K562 (cell line): ENCODE measurements at regions of chr22 and their contacts with region 1.

Region 1: GRCh38 chr22:22848364-22848866 is 39.2 kb upstream of the IGLL5 start:
- DNase-seq: peak; percentile 94 to 100 (median 98)
- ATAC-seq: peak; percentile 98
- H3K4me3 ChIP-seq: no peak overlapping the region
- H3K27ac ChIP-seq: no peak overlapping the region
- H3K4me1 ChIP-seq: no peaks in the 10 kb centered on the region
- H3K27me3 ChIP-seq: peaks cover 0 to 8% of the 10 kb centered on the region in 2 experiments; a peak in 1 of 5 replicates
- CTCF ChIP-seq: no peak
- EP300 ChIP-seq: no peak
- POLR2A ChIP-seq: no peak
- RAD21 ChIP-seq: no peak

Region 2: DNA sequence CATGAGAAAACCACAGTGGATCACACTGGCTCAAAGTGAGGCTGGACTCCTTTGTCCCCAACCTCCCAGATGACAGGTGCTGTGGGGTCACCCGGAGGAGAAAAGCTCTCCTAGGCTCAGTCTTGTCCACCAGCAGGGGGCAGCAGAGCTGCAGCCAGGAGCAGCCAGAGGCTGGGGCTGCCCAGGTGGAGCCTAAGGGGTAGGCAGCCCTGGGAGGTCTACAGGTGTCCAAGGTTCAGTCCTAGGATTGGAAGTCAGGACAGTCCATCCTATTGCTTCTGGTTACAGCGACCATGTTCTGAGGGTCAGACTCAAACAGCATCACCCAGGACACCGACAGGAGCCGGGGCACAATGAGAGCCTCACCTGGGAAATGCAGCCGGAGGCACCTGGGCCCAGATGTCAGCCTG is 38.4 kb before region 1 on chr22:
- CTCF ChIA-PET with region 1: interaction called, 13 read pairs
- POLR2A ChIA-PET with region 1: interaction called, 6 read pairs
- in situ Hi-C with region 1: no loop called
- intact Hi-C with region 1: loop called (anchors 2 kb)
- DNase-seq: peak; percentile 97 to 100 (median 98)
- ATAC-seq: peak; percentile 96
- H3K4me3 ChIP-seq: no peak overlapping the region
- H3K27ac ChIP-seq: no peak overlapping the region
- H3K4me1 ChIP-seq: peaks cover 0 to 4% of the 10 kb centered on the region in 2 experiments; a peak in 1 of 5 replicates
- H3K27me3 ChIP-seq: peaks cover 8 to 19% of the 10 kb centered on the region in 2 experiments; a peak in 3 of 5 replicates
- CTCF ChIP-seq: no peak
- EP300 ChIP-seq: no peak
- POLR2A ChIP-seq: no peak
- RAD21 ChIP-seq: no peak

Region 3: DNA sequence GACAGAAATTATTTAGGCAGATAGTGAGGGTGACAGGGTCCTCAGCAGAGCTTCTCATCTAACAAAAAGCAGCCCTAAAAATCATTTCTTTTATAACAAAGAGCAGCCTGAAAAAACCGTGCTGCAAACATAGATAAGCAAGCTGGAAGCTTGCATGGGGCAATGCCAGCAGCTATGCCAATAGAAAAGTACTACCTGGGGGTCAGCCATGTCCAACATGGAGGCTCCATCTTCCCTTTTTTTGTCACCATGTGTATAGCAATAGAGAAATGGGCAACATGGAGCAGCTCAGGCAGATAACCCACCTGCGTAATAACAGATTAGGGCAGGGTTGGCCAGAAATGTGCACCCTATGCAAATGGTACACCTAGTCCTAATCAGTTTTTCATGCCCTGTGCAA is 18.2 kb before region 1 on chr22:
- CTCF ChIA-PET with region 1: interaction called, 5 read pairs
- POLR2A ChIA-PET with region 1: interaction called, 17 read pairs
- in situ Hi-C with region 1: no loop called
- intact Hi-C with region 1: loop called (anchors 2 kb)
- DNase-seq: no peak
- ATAC-seq: no peak
- H3K4me3 ChIP-seq: no peak overlapping the region
- H3K27ac ChIP-seq: no peak overlapping the region
- H3K4me1 ChIP-seq: no peaks in the 10 kb centered on the region
- H3K27me3 ChIP-seq: peaks cover 21 to 36% of the 10 kb centered on the region in 2 experiments
- CTCF ChIP-seq: no peak
- EP300 ChIP-seq: no peak
- POLR2A ChIP-seq: no peak
- RAD21 ChIP-seq: no peak

Region 4: DNA sequence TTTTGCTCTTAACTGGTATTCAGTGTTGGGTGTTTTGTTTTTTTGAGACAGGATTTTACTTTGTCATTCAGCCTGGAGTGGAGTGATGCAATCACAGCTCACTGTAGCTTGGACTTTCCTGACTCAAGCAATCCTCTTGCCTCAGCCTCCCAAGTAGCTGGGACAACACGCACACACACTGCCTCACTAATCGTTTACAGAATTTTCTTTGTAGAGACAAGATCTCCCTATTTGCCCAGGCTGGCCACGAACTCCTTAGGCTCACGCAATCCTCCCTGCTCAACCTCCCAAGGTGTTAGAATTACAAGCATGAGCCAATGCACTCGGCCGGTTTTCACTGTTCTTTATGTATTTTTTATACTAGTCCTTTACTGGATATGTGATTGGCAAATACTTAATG is 11.8 kb before region 1 on chr22:
- CTCF ChIA-PET with region 1: interaction called, 4 read pairs
- POLR2A ChIA-PET with region 1: interaction called, 40 read pairs
- in situ Hi-C with region 1: no loop called
- intact Hi-C with region 1: no loop called
- DNase-seq: peak in 1 of 4 experiments; percentile 53
- ATAC-seq: peak; percentile 71
- H3K4me3 ChIP-seq: no peak overlapping the region
- H3K27ac ChIP-seq: no peak overlapping the region
- H3K4me1 ChIP-seq: peaks cover 0 to 7% of the 10 kb centered on the region in 2 experiments; a peak in 1 of 5 replicates
- H3K27me3 ChIP-seq: peaks cover 25 to 33% of the 10 kb centered on the region in 2 experiments
- CTCF ChIP-seq: no peak
- EP300 ChIP-seq: no peak
- POLR2A ChIP-seq: no peak
- RAD21 ChIP-seq: no peak

Region 5: GRCh38 chr22:22865311-22866072 is 17.1 kb after region 1 on chr22:
- CTCF ChIA-PET with region 1: interaction called, 4 read pairs
- POLR2A ChIA-PET with region 1: interaction called, 12 read pairs
- in situ Hi-C with region 1: no loop called
- intact Hi-C with region 1: no loop called
- DNase-seq: peak in 2 of 4 experiments; percentile 42 to 52
- ATAC-seq: no peak
- H3K4me3 ChIP-seq: no peak overlapping the region
- H3K27ac ChIP-seq: no peak overlapping the region
- H3K4me1 ChIP-seq: no peaks in the 10 kb centered on the region
- H3K27me3 ChIP-seq: peaks cover 0 to 20% of the 10 kb centered on the region in 2 experiments; a peak in 3 of 5 replicates
- CTCF ChIP-seq: no peak
- EP300 ChIP-seq: no peak
- POLR2A ChIP-seq: no peak
- RAD21 ChIP-seq: no peak

Region 6: GRCh38 chr22:22942511-22943329 is 94.3 kb after region 1 on chr22:
- CTCF ChIA-PET with region 1: interaction called, 7 read pairs
- POLR2A ChIA-PET with region 1: interaction called, 5 read pairs
- in situ Hi-C with region 1: no loop called
- intact Hi-C with region 1: loop called (anchors 1 kb)
- DNase-seq: peak; percentile 99 to 100 (median 100)
- ATAC-seq: peak; percentile 94
- H3K4me3 ChIP-seq: no peak overlapping the region
- H3K27ac ChIP-seq: no peak overlapping the region
- H3K4me1 ChIP-seq: peaks cover 0 to 3% of the 10 kb centered on the region in 2 experiments; a peak in 1 of 5 replicates
- H3K27me3 ChIP-seq: peaks cover 19 to 38% of the 10 kb centered on the region in 2 experiments; a peak in 4 of 5 replicates
- CTCF ChIP-seq: no peak
- EP300 ChIP-seq: no peak
- POLR2A ChIP-seq: no peak
- RAD21 ChIP-seq: no peak

Region 7: GRCh38 chr22:23036684-23037428 is 188.4 kb after region 1 on chr22:
- CTCF ChIA-PET with region 1: no interaction called
- POLR2A ChIA-PET with region 1: no interaction called
- in situ Hi-C with region 1: no loop called
- intact Hi-C with region 1: no loop called
- DNase-seq: peak in 3 of 4 experiments; percentile 52 to 55 (median 54)
- ATAC-seq: peak; percentile 18
- H3K4me3 ChIP-seq: no peak overlapping the region
- H3K27ac ChIP-seq: no peak overlapping the region
- H3K4me1 ChIP-seq: peaks cover 2 to 5% of the 10 kb centered on the region in 2 experiments; a peak in 1 of 5 replicates
- H3K27me3 ChIP-seq: peaks cover 18 to 54% of the 10 kb centered on the region in 2 experiments; a peak in 4 of 5 replicates
- CTCF ChIP-seq: no peak
- EP300 ChIP-seq: no peak
- POLR2A ChIP-seq: no peak
- RAD21 ChIP-seq: no peak

Region 8: DNA sequence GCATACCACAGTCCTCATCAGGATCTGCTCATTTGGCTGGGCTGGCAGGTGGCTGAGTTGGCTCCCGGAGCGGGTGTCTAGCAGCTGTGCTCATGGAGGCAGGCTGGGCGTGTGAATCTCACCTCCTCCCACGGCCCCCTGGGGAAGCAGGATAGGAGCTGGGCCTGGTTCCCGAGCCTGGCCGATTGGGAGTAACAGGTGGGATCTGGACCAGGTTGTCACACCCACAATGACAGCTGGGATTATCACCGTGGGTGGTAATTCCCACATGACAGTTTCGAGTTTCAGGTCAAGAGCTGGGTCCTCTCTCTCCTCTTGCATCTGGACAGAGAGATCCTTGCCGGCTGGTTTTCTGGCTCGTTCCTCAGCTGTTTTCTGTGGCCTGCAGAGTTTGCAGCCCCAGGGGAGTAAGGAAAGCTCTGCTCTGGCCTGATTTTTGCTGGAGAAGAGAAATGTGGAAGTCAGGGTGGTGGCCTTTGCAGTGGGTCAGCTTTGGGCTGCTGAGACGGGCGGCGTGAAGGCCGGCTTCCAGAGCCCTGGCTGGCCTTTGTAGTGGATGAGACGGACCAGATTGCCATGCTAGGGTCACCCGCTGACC is 388.9 kb after region 1 on chr22:
- CTCF ChIA-PET with region 1: no interaction called
- POLR2A ChIA-PET with region 1: no interaction called
- in situ Hi-C with region 1: no loop called
- intact Hi-C with region 1: no loop called
- DNase-seq: peak; percentile 57 to 91 (median 60)
- ATAC-seq: peak; percentile 2; the same call in 2 of the 3 replicates
- H3K4me3 ChIP-seq: no peak overlapping the region
- H3K27ac ChIP-seq: no peak overlapping the region
- H3K4me1 ChIP-seq: peaks cover 11 to 39% of the 10 kb centered on the region in 2 experiments
- H3K27me3 ChIP-seq: no peaks in the 10 kb centered on the region
- CTCF ChIP-seq: no peak
- EP300 ChIP-seq: no peak
- POLR2A ChIP-seq: no peak
- RAD21 ChIP-seq: no peak

Region 9: DNA sequence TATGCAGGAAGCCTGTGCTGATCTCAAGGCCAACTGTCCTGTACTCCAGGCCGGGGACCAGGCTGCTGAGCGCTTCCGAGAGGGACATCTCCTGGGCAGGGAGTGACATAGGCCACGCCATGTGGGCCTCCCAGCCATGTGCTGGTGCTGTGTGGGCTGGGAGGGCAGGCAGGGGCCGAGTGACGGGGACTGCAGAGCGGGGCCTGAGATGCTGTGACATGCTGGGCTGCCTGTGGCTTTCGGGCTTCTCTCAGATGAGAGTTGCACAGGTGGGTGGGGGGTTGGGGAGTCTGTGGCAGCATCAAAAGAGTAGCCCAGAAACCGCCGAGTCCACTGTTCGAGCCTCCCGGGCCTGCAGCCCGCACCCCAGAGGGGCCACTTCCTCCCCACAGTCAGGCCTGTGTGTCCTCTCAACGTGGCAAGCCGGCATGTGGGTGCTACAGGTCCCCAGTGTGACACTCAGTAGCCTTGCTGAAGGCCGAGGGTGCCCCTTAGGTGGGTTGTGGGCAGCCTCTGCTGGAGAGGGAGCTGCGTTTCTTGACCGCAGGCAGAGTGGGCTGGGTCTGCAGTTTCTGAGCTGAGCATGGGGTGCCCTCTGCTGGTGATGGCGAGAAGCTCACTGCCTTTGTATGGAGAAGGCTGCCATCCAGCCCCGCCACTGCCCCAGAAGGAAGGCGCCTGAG is 433.1 kb after region 1 on chr22:
- CTCF ChIA-PET with region 1: interaction called, 5 read pairs
- POLR2A ChIA-PET with region 1: no interaction called
- in situ Hi-C with region 1: no loop called
- intact Hi-C with region 1: loop called (anchors 10 kb)
- DNase-seq: peak; percentile 99 to 100 (median 100)
- ATAC-seq: peak; percentile 95
- H3K4me3 ChIP-seq: no peak overlapping the region
- H3K27ac ChIP-seq: no peak overlapping the region
- H3K4me1 ChIP-seq: peaks cover 0 to 27% of the 10 kb centered on the region in 2 experiments; a peak in 2 of 5 replicates
- H3K27me3 ChIP-seq: no peaks in the 10 kb centered on the region
- CTCF ChIP-seq: peak in 2 of 3 experiments; percentile 99 to 100; a peak in 4 of 6 replicates
- EP300 ChIP-seq: no peak
- POLR2A ChIP-seq: no peak
- RAD21 ChIP-seq: peak in 1 of 2 experiments; percentile 100; a peak in 2 of 4 replicates